ENCODE measurements at regions of chr5 and their contacts with region 1.

Region 1: DNA sequence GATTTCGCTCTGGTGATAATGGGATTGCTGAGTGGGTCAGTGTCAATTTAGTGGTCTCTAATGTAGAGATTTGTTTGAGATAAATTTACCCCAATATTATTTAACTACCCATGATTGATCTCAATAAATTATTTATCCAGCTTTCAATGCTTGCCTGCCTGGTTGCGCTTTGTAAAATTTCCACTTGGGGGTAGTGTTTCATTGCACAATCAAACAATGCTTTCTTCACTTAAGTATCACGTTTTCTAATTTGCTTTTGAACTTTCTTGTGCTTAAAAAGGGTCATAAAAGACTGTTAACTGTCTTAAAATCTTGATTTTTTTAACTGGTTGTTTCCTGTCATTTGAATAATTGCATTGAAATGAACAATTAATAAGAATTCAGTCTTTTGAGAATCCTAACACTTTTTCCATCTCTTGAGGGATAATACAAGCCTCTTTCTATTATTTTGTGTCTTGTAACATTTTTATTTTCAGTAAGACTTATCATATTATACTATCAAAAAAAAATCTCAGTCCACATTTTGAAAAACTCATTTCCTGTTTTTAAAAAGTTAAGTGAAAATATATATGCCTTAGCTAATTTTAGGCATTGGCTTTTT is 18.7 kb downstream of the HSD17B4 start:
- DNase-seq: peak; percentile 60
- H3K4me3 ChIP-seq: no peak overlapping the region
- H3K27ac ChIP-seq: no peak overlapping the region
- H3K4me1 ChIP-seq: peaks cover 2% of the 10 kb centered on the region
- H3K27me3 ChIP-seq: no peaks in the 10 kb centered on the region
- CTCF ChIP-seq: peak; percentile 55 to 57
- POLR2A ChIP-seq: no peak

Region 2: DNA sequence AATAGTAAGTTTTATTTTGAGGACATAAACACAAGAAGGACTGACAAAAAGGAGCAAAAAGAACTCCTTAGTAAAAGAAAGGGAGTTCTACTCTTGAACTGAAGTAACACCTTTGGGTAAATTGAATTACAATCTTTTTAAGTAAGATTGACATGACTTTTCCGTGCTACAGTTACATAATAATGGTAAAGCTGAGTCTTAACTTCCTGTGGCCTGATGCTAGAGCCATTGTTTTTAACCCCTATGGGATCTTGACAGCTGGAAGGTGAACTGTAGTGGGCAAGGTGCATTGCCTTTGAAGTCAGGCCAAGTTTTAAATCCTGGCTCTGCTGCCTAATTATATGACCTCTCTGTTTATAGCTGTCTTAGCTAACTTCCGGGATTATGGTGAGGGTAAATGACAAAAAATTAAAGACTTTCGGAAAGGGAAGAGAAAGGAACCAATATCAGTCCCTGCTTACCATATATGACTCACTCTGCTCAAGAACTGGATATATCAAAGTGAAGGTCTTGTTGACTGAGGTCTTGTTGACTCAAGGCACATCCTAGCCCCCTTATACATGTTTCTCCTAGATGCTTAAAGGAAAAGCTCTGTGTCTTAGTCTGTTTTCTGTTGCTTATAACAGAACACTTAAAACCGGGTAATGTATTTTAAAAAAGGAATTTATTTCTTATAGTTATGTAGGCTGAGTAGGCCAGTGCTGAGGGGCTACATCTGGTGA is 11.9 kb before region 1 on chr5:
- CTCF ChIA-PET with region 1: interaction called, 21 read pairs
- POLR2A ChIA-PET with region 1: no interaction called
- dilution Hi-C with region 1: no loop called
- intact Hi-C with region 1: no loop called
- DNase-seq: no peak
- H3K4me3 ChIP-seq: no peak overlapping the region
- H3K27ac ChIP-seq: no peak overlapping the region
- H3K4me1 ChIP-seq: no peaks in the 10 kb centered on the region
- H3K27me3 ChIP-seq: no peaks in the 10 kb centered on the region
- CTCF ChIP-seq: no peak
- POLR2A ChIP-seq: no peak

Region 3: DNA sequence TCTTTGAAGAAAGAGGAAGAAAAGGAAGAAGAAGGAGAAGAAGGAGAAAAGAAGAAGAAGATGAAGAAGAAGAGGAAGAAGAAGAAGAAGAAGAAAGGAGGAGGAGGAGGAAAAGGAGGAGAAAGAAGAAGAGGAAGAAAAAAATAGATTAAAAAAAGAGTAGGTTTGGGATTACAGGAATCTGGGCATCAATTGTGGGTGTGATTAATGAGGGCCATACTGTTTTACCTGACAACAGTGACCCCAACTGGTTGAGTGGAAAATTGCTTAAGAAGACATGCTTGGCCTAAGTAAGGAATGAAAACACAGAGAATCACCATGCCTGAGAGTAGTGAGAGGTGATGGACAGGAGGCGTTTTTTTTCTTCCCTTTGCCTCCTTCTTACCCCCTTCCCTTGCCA is 273.0 kb after region 1 on chr5:
- CTCF ChIA-PET with region 1: no interaction called
- POLR2A ChIA-PET with region 1: no interaction called
- dilution Hi-C with region 1: no loop called
- intact Hi-C with region 1: loop called (anchors 1 kb)
- DNase-seq: no peak
- H3K4me3 ChIP-seq: no peak overlapping the region
- H3K27ac ChIP-seq: no peak overlapping the region
- H3K4me1 ChIP-seq: no peaks in the 10 kb centered on the region
- H3K27me3 ChIP-seq: no peaks in the 10 kb centered on the region
- CTCF ChIP-seq: peak in 1 of 2 donors; percentile 14
- POLR2A ChIP-seq: no peak

Region 4: GRCh38 chr5:120457839-120458507 is 987.0 kb after region 1 on chr5:
- CTCF ChIA-PET with region 1: interaction called, 10 read pairs
- POLR2A ChIA-PET with region 1: no interaction called
- dilution Hi-C with region 1: no loop called
- intact Hi-C with region 1: loop called (anchors 1 kb)
- DNase-seq: peak; percentile 52
- H3K4me3 ChIP-seq: peak overlapping the region in 1 of 3 experiments; percentile 17
- H3K27ac ChIP-seq: no peak overlapping the region
- H3K4me1 ChIP-seq: no peaks in the 10 kb centered on the region
- H3K27me3 ChIP-seq: no peaks in the 10 kb centered on the region
- CTCF ChIP-seq: peak; percentile 45 to 64
- POLR2A ChIP-seq: no peak

Region 5: GRCh38 chr5:120655828-120656435 is 1185.0 kb after region 1 on chr5:
- CTCF ChIA-PET with region 1: interaction called, 5 read pairs
- POLR2A ChIA-PET with region 1: no interaction called
- dilution Hi-C with region 1: no loop called
- intact Hi-C with region 1: loop called (anchors 5 kb)
- DNase-seq: peak; percentile 19
- H3K4me3 ChIP-seq: no peak overlapping the region
- H3K27ac ChIP-seq: no peak overlapping the region
- H3K4me1 ChIP-seq: no peaks in the 10 kb centered on the region
- H3K27me3 ChIP-seq: no peaks in the 10 kb centered on the region
- CTCF ChIP-seq: peak; percentile 36 to 57
- POLR2A ChIP-seq: no peak